ENCODE measurements at regions of chr5 and their contacts with region 1.

Region 1: DNA sequence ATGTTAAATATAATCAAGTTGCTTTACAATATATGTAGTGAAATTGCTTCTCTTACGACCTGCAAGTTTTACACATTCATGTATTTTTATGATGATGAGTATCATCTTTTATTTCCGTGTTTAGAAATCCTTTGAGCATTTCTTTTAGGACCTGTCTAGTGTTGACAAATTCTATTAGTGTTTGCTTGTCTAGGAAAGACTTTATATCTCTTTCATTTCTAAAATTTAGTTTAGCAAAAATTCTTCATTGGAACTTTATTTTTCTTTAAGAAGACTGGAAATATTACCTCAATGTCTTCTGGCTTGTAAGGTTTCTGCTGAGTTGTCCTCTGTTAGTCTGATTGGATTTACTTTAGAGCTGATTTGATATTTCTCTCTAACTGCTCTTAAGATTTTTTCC is 920.9 kb upstream of the CTNND2 start:
- DNase-seq: no peak
- ATAC-seq: no peak
- H3K4me3 ChIP-seq: no peak overlapping the region
- H3K4me1 ChIP-seq: no peaks in the 10 kb centered on the region
- CTCF ChIP-seq: no peak

Region 2: DNA sequence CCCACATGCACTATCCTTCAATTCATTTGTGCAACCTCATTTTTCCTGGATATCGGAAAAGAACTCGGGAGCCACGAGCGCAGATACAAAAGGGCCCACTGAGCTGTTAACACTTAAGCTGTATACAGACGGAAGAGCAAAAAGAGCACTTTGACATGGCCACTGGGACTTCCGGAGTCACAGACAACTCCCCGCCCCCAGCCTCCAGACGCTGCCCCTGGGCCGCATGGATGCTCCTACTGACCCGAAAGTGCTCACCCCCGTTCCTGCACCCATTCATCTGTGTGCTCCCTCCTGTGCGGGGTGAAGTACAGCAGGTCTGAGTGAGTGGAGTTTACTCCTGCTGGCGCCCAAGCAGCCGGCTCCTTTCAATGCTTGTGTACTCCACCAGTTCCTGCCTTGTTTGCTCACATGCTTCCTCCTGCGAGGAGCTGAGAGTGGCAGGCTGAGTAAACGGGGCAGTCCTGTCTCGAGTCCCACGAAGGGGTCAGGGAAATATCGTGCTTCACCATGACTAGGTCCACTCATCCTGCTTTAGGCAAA is 19.9 kb before region 1 on chr5:
- intact Hi-C with region 1: loop called in 1 of 2 experiments (anchors 1 kb)
- DNase-seq: peak in 1 of 3 donors; percentile 19
- ATAC-seq: no peak
- H3K4me3 ChIP-seq: no peak overlapping the region
- H3K4me1 ChIP-seq: no peaks in the 10 kb centered on the region
- CTCF ChIP-seq: no peak

Region 3: DNA sequence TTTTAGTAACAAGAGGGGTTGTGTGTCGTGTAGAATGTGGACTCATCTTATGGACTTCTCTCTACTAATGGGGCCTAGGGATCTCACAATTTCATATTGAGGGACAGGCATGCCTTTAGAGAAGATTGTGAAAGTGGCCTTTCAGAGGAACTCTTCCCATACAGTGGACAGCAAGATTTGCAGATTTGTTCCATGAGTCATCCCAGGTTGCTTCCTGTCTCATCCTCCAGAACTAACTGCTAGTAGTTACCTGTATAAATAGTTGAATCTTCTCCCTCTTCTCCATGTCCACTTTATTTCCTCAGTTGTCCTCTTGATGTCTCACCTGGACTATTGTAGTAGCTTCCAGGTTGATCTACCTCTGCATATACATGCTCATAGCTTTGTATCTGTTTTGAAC is 76.5 kb after region 1 on chr5:
- intact Hi-C with region 1: no loop called
- DNase-seq: no peak
- ATAC-seq: no peak
- H3K4me3 ChIP-seq: no peak overlapping the region
- H3K4me1 ChIP-seq: no peaks in the 10 kb centered on the region
- CTCF ChIP-seq: no peak

Region 4: GRCh38 chr5:12974856-12975255 is 149.7 kb after region 1 on chr5:
- intact Hi-C with region 1: no loop called
- DNase-seq: no peak
- ATAC-seq: no peak
- H3K4me3 ChIP-seq: no peak overlapping the region
- H3K4me1 ChIP-seq: no peaks in the 10 kb centered on the region
- CTCF ChIP-seq: no peak

Measured in mucosa of descending colon (tissue), 3 donors.